ENCODE measurements at regions of chr7 and their contacts with region 1.

Region 1: DNA sequence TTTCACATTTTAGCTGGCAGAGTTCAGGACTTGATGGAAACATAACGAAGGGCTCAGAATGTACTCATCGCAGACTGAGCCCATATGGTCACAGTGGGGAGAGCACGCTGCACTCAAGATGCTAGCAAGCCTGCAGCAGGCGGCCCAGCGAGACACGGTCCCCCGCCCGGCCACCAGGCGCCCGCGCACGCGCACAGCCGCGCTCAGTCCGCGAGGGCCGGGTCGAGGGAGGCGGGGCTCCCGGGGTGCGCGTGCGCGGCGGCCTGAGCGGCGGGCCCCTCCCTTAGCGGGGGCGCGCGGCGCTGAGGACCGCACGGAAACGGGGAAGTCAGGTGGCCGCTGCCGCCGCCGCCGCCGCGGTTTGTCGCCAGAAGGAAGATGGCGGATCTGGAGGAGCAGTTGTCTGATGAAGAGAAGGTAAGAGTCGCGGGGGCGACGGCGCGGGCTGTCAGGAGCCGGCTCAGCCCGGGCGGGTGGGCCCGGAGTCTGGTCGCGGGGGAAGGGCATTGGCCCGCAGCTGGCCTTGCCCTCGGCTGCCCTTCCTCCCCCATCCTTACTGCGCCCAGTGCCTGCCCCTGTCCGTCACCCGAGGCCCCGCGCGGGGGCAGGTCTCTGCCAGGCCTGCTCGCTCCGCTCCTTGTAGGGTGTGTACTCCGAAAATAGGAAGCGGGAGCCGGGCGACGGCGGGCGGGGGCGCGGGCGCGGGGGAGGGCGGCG is at the start of gene CAPZA2:
- DNase-seq: peak; percentile 97 to 98
- ATAC-seq: peak; percentile 90 to 98 (median 91)
- H3K4me3 ChIP-seq: peak within 1 kb of the TSS; percentile 80
- H3K4me3 Mint-ChIP-seq: peak within 1 kb of the TSS; percentile 99
- H3K27ac ChIP-seq: peak within 1 kb of the TSS; percentile 88
- H3K27ac Mint-ChIP-seq: peak within 1 kb of the TSS; percentile 93 to 95
- H3K4me1 ChIP-seq: peaks cover 12% of the 10 kb centered on the region
- H3K4me1 Mint-ChIP-seq: peaks cover 36 to 48% of the 10 kb centered on the region in 2 donors
- H3K27me3 ChIP-seq: no peaks in the 10 kb centered on the region
- H3K27me3 Mint-ChIP-seq: peaks cover 16 to 20% of the 10 kb centered on the region in 2 donors
- CTCF ChIP-seq: peak; percentile 36
- total RNA-seq, gene CAPZA2: 97.0 to 135 (median 131) TPM

Region 2: DNA sequence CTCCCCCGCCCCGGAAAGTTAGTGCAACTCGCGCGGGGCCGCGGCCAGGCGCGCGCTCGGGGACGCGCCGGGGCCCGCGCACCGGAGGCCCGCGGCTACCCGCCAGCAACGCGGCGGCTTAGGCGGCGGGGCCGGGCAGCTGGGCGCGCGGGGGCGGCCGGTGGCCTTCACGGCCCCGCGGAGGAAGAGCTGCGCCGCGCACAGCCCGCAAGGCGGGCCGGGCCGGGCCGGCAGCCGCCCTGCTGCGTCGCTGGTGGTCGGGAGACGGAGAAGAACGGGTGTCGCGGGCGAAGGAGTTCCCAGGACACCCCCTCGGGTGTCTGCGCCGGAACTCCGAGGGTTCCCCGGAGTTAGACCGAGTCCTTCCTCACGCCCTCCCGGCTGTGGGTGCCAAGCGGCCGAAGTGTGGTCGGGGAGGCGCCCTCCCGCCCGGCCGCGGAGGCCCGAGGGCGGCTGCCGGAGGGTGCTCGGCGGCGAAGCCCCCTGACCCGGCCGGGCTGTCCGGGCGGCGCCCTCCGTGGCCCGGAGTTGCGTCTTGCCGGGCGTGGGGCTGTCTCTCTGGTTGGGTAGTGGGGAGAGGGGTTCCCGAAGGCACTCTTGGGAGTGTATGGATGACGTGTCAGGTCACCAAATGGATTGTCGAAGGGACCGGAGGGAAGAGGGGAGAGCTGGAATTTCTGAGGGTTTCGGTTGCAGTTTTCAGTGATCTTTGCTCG is 91.5 kb after region 1 on chr7:
- intact Hi-C with region 1: loop called (anchors 2 kb)
- DNase-seq: peak; percentile 61 to 81
- ATAC-seq: peak; percentile 72 to 84 (median 78)
- H3K4me3 ChIP-seq: peak overlapping the region; percentile 80
- H3K4me3 Mint-ChIP-seq: peak overlapping the region; percentile 90
- H3K27ac ChIP-seq: peak overlapping the region; percentile 81
- H3K27ac Mint-ChIP-seq: peak overlapping the region; percentile 19 to 84
- H3K4me1 ChIP-seq: peaks cover 11% of the 10 kb centered on the region
- H3K4me1 Mint-ChIP-seq: peaks cover 21% of the 10 kb centered on the region in 2 donors
- H3K27me3 ChIP-seq: no peaks in the 10 kb centered on the region
- H3K27me3 Mint-ChIP-seq: peaks cover 7% of the 10 kb centered on the region in 2 donors
- CTCF ChIP-seq: no peak

Region 3: DNA sequence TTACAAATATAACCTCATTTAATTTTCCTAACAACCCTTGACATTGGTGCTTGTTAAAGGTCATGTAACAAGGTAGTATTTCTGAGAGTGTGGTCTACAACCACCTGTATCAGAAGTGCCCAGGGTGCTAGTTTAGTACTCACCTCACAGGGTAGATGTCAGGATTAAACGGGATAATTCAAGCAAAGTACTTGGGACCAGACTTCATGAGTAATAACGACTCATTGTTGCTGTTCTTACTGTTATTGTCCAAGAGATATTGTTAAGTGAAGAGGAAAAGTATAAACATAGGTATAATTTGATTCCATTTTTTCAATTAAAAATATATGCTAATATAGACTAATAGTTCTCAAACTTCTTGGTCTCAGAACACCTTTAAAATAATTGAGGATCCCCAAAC is 281.2 kb after region 1 on chr7:
- intact Hi-C with region 1: no loop called
- DNase-seq: no peak
- ATAC-seq: no peak
- H3K4me3 ChIP-seq: no peak overlapping the region
- H3K4me3 Mint-ChIP-seq: no peak overlapping the region
- H3K27ac ChIP-seq: no peak overlapping the region
- H3K27ac Mint-ChIP-seq: no peak overlapping the region
- H3K4me1 ChIP-seq: no peaks in the 10 kb centered on the region
- H3K4me1 Mint-ChIP-seq: no peaks in the 10 kb centered on the region
- H3K27me3 ChIP-seq: no peaks in the 10 kb centered on the region
- H3K27me3 Mint-ChIP-seq: no peaks in the 10 kb centered on the region
- CTCF ChIP-seq: no peak

Measured in natural killer cell (primary cell).